Body of pancreas (tissue), 4 donors: ENCODE measurements at regions of chr4 and their contacts with region 1.

Region 1: DNA sequence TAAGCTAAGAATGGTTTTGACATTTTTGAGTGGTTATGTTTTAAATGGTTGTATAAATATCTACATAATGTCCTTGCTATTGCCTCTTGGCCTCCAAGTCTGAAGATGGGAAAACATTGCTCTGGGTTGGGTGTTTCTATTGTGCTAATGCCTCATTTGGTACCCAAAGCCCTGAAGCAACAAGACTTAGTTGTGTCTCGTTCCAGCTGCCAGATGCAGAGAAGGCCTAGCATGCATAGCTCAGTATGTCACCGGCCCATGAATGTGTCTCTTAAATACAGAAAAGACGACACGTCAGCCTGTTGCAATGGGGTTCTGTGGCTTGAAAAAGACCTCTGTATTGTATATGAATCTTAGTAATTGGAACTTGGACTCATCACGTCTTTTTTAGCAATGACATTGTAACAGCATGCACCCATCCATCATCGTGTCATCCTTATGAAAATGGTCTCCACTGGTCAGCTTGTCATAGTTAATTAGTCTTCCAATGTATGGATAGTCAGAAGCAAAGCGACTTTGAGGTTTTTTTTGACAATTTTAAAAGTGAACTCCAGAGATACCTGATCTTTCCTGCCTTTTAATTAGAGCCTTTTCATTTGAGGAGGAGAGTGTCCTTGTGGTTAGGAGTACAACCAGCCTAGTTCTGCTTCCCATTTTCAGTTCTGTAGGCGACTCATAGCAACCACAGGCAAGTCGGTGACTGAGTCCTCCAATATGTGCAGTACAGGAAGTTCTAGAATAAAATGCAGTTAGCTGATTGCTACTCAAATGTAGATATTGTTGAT is 126.4 kb upstream of the GATB start:
- DNase-seq: no peak
- ATAC-seq: no peak
- H3K4me3 ChIP-seq: no peak overlapping the region
- H3K27ac ChIP-seq: no peak overlapping the region
- H3K4me1 ChIP-seq: no peaks in the 10 kb centered on the region
- H3K27me3 ChIP-seq: no peaks in the 10 kb centered on the region
- CTCF ChIP-seq: no peak
- POLR2A ChIP-seq: no peak

Region 2: GRCh38 chr4:151644622-151645021 is 242.6 kb before region 1 on chr4:
- intact Hi-C with region 1: no loop called
- DNase-seq: peak in 3 of 4 donors; percentile 19 to 31 (median 22)
- ATAC-seq: no peak
- H3K4me3 ChIP-seq: no peak overlapping the region
- H3K27ac ChIP-seq: no peak overlapping the region
- H3K4me1 ChIP-seq: no peaks in the 10 kb centered on the region
- H3K27me3 ChIP-seq: no peaks in the 10 kb centered on the region
- CTCF ChIP-seq: peak in 6 of 7 experiments; percentile 8 to 37 (median 28)
- POLR2A ChIP-seq: no peak

Region 3: DNA sequence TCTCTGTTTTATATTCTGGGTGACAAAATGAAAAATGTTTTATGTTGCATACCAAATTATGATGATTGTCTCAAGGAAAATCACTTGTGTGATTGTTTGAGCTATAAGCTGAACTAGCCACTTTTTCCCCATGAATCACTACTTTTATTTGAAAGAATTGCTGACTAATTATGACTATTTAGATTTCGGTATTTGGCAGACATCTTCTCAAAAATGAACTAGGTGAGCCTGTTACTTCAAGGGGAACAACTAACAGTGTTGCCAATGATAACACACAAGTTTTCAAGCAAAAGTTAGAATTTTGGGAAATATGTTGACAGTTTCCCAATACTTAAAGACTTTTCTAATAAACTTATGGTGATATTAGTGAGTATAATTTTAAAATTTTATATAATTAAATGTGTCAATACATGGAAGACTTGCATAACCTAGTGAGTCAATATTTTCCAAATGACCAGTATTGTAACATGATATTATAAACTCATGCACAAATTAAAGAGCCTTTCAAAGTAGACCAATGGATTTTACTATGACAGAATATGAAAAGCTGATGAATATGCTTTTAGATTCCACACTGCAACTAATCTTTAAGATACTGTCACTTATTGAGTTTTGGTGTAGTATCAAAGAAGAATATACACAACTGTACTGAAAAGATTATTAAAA is 61.3 kb after region 1 on chr4:
- intact Hi-C with region 1: loop called (anchors 10 kb)
- DNase-seq: no peak
- ATAC-seq: no peak
- H3K4me3 ChIP-seq: no peak overlapping the region
- H3K27ac ChIP-seq: no peak overlapping the region
- H3K4me1 ChIP-seq: no peaks in the 10 kb centered on the region
- H3K27me3 ChIP-seq: no peaks in the 10 kb centered on the region
- CTCF ChIP-seq: no peak
- POLR2A ChIP-seq: no peak

Region 4: DNA sequence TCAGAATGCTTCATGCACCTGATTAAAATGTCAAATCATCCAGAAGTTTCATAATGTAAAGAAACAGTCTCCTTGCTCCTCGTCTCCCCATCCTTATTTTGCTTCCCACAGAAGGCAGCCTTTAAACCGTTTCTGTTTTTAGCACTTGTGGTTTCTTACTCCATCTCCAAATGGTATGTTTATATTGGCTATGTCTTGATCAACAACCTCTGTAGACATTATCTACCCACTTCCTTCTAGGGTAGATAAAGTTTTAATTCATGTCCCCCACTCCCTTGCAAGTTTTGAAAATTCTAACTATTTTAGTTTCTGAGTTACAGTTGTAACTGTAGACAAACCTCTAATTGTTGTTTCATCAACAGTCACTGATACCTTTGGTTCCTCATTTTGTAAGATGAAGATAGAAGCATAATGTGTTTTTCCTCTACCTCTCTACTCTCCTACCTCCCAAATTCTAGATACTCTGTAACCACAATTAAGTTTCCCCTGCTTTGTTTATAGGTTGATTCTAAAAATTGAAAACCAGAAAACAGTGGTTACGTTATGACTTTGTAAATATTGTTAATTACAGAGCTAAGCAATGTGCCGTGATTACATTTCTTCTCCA is 165.3 kb after region 1 on chr4:
- intact Hi-C with region 1: no loop called
- DNase-seq: no peak
- ATAC-seq: no peak
- H3K4me3 ChIP-seq: no peak overlapping the region
- H3K27ac ChIP-seq: no peak overlapping the region
- H3K4me1 ChIP-seq: no peaks in the 10 kb centered on the region
- H3K27me3 ChIP-seq: no peaks in the 10 kb centered on the region
- CTCF ChIP-seq: no peak
- POLR2A ChIP-seq: no peak